B cell (primary cell): ENCODE measurements at regions of chr13 and their contacts with region 1.

Region 1: DNA sequence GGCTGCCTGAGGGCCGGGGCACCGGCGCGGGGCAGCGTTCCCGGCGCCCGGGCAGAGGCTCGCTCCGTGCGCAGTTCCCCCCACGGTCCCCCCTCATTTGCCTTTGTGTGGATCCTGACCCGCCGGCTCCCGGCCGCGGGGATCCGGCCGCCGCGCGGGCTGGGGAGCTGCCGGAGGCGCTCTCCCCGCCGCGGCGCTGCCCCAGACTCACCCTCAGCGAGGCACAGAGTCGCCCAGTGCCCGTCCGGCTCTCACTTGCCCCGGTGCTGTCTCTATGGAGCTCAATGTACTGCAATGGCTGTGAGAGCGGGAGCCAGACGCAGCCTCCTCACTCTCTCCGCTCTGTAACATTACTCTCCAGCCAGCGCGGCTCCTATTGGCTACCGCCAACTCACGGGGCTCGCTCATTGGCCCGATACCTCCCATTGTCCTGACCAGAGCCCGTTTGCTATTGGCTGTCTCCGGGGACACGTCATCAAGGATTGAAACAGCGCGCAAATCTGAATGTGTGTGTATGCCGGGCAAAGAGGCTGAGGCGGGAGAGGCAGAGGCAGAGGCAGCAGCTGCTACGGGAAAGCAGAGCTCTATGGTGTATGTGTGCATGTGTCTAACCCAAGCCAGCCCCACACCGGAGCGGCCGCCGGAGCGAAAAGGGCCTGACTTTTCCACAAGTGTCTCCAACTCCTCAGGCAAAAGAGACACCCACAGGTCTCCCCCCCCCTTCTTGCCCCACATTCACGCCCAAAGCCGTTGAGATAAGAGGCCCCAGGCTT is at the start of gene HMGB1:
- DNase-seq: peak; percentile 97
- ATAC-seq: peak; percentile 82
- H3K4me3 ChIP-seq: peak within 1 kb of the TSS; percentile 21 to 86 (median 78)
- H3K4me3 Mint-ChIP-seq: peak within 1 kb of the TSS; percentile 98
- H3K27ac ChIP-seq: peak within 1 kb of the TSS; percentile 54 to 91
- H3K27ac Mint-ChIP-seq: peak within 1 kb of the TSS; percentile 100
- H3K4me1 ChIP-seq: peaks cover 33 to 38% of the 10 kb centered on the region in 2 donors
- H3K4me1 Mint-ChIP-seq: peaks cover 38% of the 10 kb centered on the region
- H3K27me3 ChIP-seq: no peaks in the 10 kb centered on the region
- H3K27me3 Mint-ChIP-seq: no peaks in the 10 kb centered on the region
- CTCF ChIP-seq: no peak
- total RNA-seq, gene HMGB1: 483 and 529 TPM in 2 replicates

Region 2: GRCh38 chr13:29850224-29850898 is 615.4 kb before region 1 on chr13 and contains the start of gene UBL3:
- CTCF ChIA-PET with region 1: no interaction called
- POLR2A ChIA-PET with region 1: no interaction called
- intact Hi-C with region 1: loop called (anchors 2 kb)
- DNase-seq: peak; percentile 97
- ATAC-seq: peak; percentile 92
- H3K4me3 ChIP-seq: peak within 1 kb of the TSS; percentile 78 to 99 (median 87)
- H3K4me3 Mint-ChIP-seq: peak within 1 kb of the TSS; percentile 91
- H3K27ac ChIP-seq: peak within 1 kb of the TSS; percentile 93 to 94
- H3K27ac Mint-ChIP-seq: peak within 1 kb of the TSS; percentile 99
- H3K4me1 ChIP-seq: peaks cover 17 to 20% of the 10 kb centered on the region in 2 donors
- H3K4me1 Mint-ChIP-seq: peaks cover 28% of the 10 kb centered on the region
- H3K27me3 ChIP-seq: no peaks in the 10 kb centered on the region
- H3K27me3 Mint-ChIP-seq: no peaks in the 10 kb centered on the region
- CTCF ChIP-seq: no peak
- total RNA-seq, gene UBL3: 26.4 and 27.9 TPM in 2 replicates

Region 3: DNA sequence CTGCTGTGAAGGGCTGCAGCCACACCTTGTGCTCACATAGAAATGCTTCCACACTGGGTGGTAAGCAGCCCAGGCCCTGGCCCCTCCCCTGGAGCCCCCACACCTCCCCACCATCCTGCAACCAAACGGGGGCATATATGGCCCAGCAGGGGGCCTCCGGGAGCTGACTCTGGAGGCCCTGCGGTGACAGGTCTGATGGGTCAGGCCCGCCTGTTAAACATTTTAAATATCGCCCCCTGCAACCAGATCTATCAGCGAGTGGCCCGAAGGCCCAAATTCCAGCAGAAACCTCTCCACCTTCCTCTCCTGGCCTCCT is 110.4 kb before region 1 on chr13:
- CTCF ChIA-PET with region 1: interaction called, 23 read pairs
- POLR2A ChIA-PET with region 1: interaction called, 4 read pairs
- intact Hi-C with region 1: loop called (anchors 1 kb)
- DNase-seq: peak; percentile 83
- ATAC-seq: peak; percentile 96
- H3K4me3 ChIP-seq: peak overlapping the region in 1 of 5 experiments; percentile 12
- H3K4me3 Mint-ChIP-seq: peak overlapping the region; percentile 72
- H3K27ac ChIP-seq: no peak overlapping the region
- H3K27ac Mint-ChIP-seq: peak overlapping the region; percentile 60
- H3K4me1 ChIP-seq: peaks cover 21 to 32% of the 10 kb centered on the region in 2 donors
- H3K4me1 Mint-ChIP-seq: peaks cover 30% of the 10 kb centered on the region
- H3K27me3 ChIP-seq: no peaks in the 10 kb centered on the region
- H3K27me3 Mint-ChIP-seq: no peaks in the 10 kb centered on the region
- CTCF ChIP-seq: peak; percentile 79

Region 4: GRCh38 chr13:30408319-30409101 is 57.3 kb before region 1 on chr13:
- CTCF ChIA-PET with region 1: interaction called, 29 read pairs
- POLR2A ChIA-PET with region 1: interaction called, 3 read pairs
- intact Hi-C with region 1: loop called (anchors 1 kb)
- DNase-seq: peak; percentile 94
- ATAC-seq: peak; percentile 97
- H3K4me3 ChIP-seq: peak overlapping the region; percentile 14 to 53 (median 48)
- H3K4me3 Mint-ChIP-seq: peak overlapping the region; percentile 73
- H3K27ac ChIP-seq: peak overlapping the region; percentile 56 to 67
- H3K27ac Mint-ChIP-seq: peak overlapping the region; percentile 85
- H3K4me1 ChIP-seq: peaks cover 25 to 40% of the 10 kb centered on the region in 2 donors
- H3K4me1 Mint-ChIP-seq: peaks cover 49% of the 10 kb centered on the region
- H3K27me3 ChIP-seq: no peaks in the 10 kb centered on the region
- H3K27me3 Mint-ChIP-seq: no peaks in the 10 kb centered on the region
- CTCF ChIP-seq: peak; percentile 72

Region 5: GRCh38 chr13:30551189-30551588 is 85.4 kb after region 1 on chr13:
- CTCF ChIA-PET with region 1: no interaction called
- POLR2A ChIA-PET with region 1: no interaction called
- intact Hi-C with region 1: loop called (anchors 1 kb)
- DNase-seq: peak; percentile 64
- ATAC-seq: peak; percentile 84
- H3K4me3 ChIP-seq: no peak overlapping the region
- H3K4me3 Mint-ChIP-seq: no peak overlapping the region
- H3K27ac ChIP-seq: no peak overlapping the region
- H3K27ac Mint-ChIP-seq: no peak overlapping the region
- H3K4me1 ChIP-seq: peaks cover 8% of the 10 kb centered on the region in 2 donors
- H3K4me1 Mint-ChIP-seq: peaks cover 7% of the 10 kb centered on the region
- H3K27me3 ChIP-seq: no peaks in the 10 kb centered on the region
- H3K27me3 Mint-ChIP-seq: no peaks in the 10 kb centered on the region
- CTCF ChIP-seq: peak; percentile 61

Region 6: DNA sequence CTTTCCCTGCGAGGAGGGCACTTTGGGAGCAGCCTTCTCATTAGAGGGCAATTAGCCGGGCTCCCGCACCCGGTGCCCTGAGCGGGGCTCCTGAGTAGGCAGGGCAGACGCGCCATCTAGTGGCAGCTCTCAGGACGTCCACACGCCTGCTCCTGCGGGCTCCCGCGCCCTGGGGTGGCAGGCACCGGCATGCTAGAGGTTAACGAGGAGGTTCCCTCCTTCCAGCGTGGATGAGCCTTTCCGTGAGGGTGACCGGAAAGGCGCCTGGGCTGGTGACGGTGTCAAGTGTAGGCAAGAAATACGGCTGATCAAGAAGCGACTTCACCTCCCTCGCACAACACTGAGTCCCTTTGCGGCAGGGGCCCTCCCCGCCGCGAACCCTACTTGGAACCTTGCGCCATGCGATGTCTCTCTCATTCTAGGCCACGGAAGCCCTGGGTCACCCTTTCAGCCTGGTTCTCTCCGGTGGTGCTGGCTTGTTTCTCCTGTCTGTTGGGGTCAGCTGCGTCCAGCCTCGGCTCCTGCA is 337.2 kb after region 1 on chr13:
- CTCF ChIA-PET with region 1: interaction called, 9 read pairs
- POLR2A ChIA-PET with region 1: no interaction called
- intact Hi-C with region 1: loop called (anchors 1 kb)
- DNase-seq: peak; percentile 87
- ATAC-seq: peak; percentile 99
- H3K4me3 ChIP-seq: peak overlapping the region in 3 of 5 experiments; percentile 18 to 37 (median 21)
- H3K4me3 Mint-ChIP-seq: peak overlapping the region; percentile 80
- H3K27ac ChIP-seq: no peak overlapping the region
- H3K27ac Mint-ChIP-seq: no peak overlapping the region
- H3K4me1 ChIP-seq: peaks cover 8 to 9% of the 10 kb centered on the region in 2 donors
- H3K4me1 Mint-ChIP-seq: peaks cover 11% of the 10 kb centered on the region
- H3K27me3 ChIP-seq: peaks cover 0 to 8% (median 0%) of the 10 kb centered on the region in 4 experiments
- H3K27me3 Mint-ChIP-seq: no peaks in the 10 kb centered on the region
- CTCF ChIP-seq: peak; percentile 98